ENCODE measurements at regions of chr1 and their contacts with region 1.

Region 1: DNA sequence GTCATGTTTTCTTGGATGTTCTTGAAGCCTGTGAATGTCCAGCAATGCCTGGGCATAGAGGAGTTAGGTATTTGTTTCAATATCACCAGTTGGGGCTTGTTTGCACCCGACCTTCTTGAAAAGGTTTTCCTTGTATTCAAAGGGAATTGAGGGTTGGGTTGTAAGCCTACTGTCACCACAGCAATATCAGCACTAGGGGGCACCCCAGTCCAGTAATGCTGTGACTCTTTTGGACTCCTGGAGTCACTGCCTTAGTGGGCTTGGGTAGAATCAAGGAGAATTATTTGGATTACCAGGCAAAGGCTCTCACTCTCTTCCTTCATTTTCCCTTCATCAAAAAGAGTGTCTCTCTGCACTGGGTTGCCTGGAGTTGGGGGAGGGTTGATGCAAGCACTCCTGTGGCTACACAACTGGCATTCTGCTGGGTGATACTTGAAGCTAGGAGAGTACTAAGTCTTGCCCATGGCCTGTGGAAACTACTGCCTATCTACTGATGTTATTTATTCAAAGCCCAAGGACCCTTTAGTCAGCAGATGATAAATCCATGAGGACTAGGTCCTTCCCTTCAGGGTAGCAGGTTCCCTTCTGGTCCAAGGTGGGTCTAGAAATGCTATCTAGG is 34.5 kb downstream of the OR10R2 start:
- DNase-seq: peak; percentile 9
- ATAC-seq: no peak
- H3K4me3 ChIP-seq: no peak overlapping the region
- H3K27ac ChIP-seq: no peak overlapping the region
- H3K4me1 ChIP-seq: peaks cover 0 to 12% (median 0%) of the 10 kb centered on the region in 9 donors
- H3K27me3 ChIP-seq: peaks cover 0 to 9% (median 0%) of the 10 kb centered on the region in 7 donors
- CTCF ChIP-seq: peak in 7 of 9 donors; percentile 19 to 70 (median 29)

Region 2: DNA sequence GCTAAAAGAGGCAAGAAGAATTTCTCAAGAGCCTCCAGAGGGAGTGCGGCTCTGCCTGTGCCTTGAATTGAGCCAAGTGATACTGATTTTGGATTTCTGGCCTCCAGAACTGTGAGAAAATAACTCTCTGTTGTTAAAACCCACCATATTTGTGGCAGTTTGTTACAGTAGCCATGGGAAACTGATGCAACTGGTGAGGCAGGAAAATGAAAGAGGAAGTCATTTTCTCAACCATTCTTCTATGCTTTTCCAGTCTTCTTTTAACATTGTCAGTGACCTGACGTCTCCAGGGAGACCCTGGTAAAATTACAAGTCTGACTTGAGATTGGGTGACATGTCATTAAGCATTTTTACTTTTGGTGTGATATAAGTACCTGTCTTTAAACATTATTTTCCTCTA is 58.1 kb after region 1 on chr1:
- intact Hi-C with region 1: no loop called
- DNase-seq: no peak
- ATAC-seq: no peak
- H3K4me3 ChIP-seq: no peak overlapping the region
- H3K27ac ChIP-seq: no peak overlapping the region
- H3K4me1 ChIP-seq: peaks cover 0 to 8% (median 0%) of the 10 kb centered on the region in 9 donors
- H3K27me3 ChIP-seq: no peaks in the 10 kb centered on the region
- CTCF ChIP-seq: no peak

Region 3: GRCh38 chr1:158998781-158999161 is 492.3 kb after region 1 on chr1:
- intact Hi-C with region 1: loop called in 3 of 10 experiments (anchors 2 to 10 kb)
- DNase-seq: peak; percentile 45 to 59
- ATAC-seq: peak; percentile 23 to 75 (median 55)
- H3K4me3 ChIP-seq: peak overlapping the region in 9 of 10 donors; percentile 16 to 65 (median 53)
- H3K27ac ChIP-seq: peak overlapping the region; percentile 27 to 95 (median 86)
- H3K4me1 ChIP-seq: peaks cover 0 to 40% (median 16%) of the 10 kb centered on the region in 9 donors
- H3K27me3 ChIP-seq: no peaks in the 10 kb centered on the region
- CTCF ChIP-seq: peak; percentile 76 to 96 (median 91)

Region 4: GRCh38 chr1:159084867-159085266 is 578.4 kb after region 1 on chr1:
- intact Hi-C with region 1: no loop called
- DNase-seq: no peak
- ATAC-seq: peak in 4 of 8 donors; percentile 18 to 52 (median 44)
- H3K4me3 ChIP-seq: no peak overlapping the region
- H3K27ac ChIP-seq: peak overlapping the region in 1 of 10 donors; percentile 86
- H3K4me1 ChIP-seq: peaks cover 0 to 37% (median 4%) of the 10 kb centered on the region in 9 donors
- H3K27me3 ChIP-seq: no peaks in the 10 kb centered on the region
- CTCF ChIP-seq: no peak

Measured in heart right ventricle (tissue), 16 donors.